AG04449 (cell line): ENCODE measurements at regions of chr19 and their contacts with region 1.

Region 1: DNA sequence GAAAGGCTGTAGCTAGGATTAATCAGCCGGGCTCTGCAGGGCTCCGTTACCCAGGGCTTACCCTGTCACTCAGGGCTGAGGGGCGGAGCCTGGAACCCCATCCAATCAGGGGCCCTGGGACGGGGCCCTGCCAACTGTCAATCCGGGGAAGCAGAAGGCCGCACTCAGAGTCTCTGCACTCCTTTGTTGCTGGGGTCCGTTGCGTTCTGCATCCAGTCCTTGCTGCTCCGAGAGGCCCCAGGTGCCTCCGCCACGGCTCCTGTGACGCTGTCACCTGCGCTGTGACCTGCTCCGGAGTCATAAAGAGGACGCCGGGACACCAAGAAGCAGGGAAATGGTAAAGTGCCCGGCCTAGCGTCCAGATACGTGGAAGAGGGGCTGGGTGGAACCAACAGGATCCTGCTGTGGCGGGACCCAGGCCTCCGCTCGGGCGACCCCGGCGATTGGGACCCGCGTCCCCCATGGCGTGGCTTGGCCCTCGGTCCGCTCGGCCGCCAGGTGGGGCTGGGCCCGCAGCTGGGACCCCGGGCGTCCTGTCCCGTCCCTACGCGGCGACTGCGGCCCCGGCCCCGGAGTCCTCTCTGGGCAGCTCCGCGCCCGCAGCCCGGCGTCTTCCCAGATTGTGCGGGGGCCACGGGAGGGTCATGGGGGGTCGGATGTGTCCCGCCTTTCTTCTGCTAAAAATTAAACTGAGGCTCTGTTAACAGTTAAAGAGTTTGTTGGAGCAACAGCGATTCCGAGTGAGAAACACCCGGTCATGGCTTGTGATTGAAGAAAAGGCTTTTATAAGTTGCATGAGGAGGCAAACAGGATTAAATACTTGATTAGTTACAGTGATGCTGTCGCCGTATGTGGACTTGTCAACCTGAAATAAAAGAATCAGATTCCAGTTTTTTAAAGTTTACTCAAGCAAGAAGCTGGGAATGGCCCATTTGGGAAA is at the start of gene ZNF491:
- DNase-seq: peak; percentile 34
- H3K4me3 ChIP-seq: peak within 1 kb of the TSS; percentile 81
- CTCF ChIP-seq: peak; percentile 50

Region 2: DNA sequence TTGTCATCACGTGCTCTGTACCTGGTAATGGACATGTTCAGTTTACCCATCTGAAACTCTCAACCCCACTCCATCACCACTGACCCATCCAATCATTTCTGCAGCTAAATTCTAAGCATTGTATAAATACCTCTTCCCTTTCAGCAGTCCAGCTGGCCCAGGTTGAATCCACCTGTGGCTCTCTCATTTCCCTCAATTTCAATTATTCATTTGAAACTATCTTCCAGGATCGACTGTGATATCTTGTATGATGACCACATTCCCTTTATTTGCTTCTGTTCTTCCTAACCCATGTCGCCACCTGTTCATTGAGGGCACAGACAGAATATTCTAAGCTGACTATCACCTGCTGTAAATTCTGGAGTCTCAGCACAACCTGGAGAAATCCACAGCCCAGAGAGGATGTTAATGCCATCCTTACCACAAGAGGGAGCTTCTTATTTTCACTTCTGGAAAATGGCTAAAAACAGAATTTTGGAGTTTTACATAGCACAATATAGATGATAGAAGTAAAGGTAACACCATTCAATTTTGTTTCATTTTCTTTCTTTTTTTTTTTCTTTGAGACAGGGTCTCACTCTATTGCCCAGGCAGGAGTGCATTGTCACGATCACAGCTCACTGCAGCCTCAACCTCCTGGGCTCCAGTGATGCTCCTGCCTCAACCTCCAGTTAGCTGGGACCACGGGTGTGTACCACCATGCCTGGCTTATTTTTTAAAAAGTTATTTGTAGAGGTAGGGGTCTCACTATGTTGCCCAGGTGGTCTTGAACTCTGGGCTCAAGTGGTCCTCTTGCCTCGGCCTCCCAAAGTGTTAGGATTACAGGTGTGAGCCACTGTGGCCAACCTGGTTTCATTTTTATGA is 98.5 kb before region 1 on chr19:
- CTCF ChIA-PET with region 1: interaction called, 12 read pairs
- POLR2A ChIA-PET with region 1: no interaction called
- DNase-seq: no peak
- H3K4me3 ChIP-seq: no peak overlapping the region
- CTCF ChIP-seq: peak; percentile 57

Region 3: DNA sequence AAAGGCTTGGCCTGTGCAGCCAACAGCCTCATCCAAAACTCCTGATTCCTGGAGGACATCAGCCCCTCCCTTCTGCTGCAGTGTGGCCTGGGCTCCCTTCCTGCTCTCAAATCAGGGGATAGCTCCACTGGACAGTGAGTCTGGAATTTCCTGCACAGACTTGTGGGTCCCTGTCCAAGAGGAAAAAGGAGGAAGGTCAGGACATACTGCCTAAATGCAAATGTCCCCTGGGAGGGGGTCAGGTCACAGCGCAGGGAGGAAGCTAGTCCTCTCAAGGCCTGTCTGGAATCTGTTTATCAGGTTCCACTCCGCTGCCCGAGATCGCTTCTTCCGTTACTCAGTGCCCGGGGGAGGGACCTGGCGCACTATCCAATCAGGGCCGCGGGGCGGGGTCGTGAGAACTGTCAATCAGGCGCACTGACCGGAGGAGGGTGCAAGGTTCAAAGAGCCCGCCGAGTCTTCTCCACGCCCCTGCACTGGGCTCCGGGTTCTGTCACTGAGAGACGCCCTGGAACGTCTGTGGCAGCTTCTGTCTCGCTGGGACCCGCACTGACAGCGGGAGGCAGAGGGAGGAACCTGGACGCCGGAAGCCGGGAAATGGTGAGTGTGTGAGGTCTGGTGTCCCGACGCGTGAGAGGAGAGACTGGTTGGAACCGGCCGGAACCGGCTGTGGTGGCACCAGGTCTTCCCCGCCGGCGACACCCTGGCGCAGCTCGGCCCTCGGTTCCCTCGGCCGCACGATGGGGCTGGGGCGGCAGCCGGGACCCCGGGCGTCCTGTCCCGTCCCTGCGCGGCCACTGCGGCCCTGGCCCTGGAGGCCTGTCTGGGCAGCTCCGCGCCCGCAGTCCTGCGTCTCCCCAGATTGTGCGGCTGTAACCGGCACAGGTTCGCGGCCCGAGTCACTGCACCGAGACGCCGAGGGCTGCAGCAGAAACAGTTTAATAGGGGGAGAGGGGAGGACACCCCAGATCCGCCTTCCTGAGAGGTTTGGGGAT is 31.8 kb before region 1 on chr19 and contains the start of gene ZNF441:
- CTCF ChIA-PET with region 1: interaction called, 13 read pairs
- POLR2A ChIA-PET with region 1: no interaction called
- DNase-seq: peak; percentile 42
- H3K4me3 ChIP-seq: peak within 1 kb of the TSS; percentile 95
- CTCF ChIP-seq: no peak

Region 4: GRCh38 chr19:11787536-11787935 is 11.1 kb before region 1 on chr19:
- CTCF ChIA-PET with region 1: interaction called, 31 read pairs
- POLR2A ChIA-PET with region 1: no interaction called
- DNase-seq: no peak
- H3K4me3 ChIP-seq: no peak overlapping the region
- CTCF ChIP-seq: no peak

Region 5: DNA sequence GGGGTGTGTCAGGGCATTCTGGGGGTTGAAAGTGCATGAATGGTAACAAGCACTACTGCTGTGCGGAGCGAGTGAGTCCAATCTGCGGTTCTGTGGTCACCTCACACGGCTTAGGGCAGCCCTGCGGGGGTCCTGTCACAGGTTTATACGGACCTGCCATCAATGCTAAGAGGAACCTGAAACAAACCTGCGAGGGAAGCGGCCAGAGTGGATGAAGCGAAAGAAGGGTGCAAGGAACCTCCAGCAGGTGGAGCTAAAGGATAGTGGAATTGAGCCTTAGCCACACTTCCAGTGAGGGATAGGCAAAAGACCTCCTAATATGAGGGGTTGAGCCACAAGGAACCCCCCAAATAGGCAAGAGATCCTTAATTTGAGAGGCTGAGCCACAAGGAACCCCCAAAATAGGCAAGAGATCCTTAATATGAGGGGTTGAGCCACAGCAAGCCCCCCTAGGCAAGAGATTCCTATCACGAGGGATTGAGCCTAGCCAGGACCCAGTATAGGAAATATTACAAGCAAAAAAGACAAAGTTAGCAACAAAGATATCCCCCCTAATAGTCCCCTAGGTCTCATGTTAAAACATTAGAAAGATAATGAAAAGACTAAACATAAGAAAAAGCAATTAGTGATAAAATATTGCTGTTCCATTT is 82.6 kb after region 1 on chr19:
- CTCF ChIA-PET with region 1: interaction called, 12 read pairs
- POLR2A ChIA-PET with region 1: no interaction called
- DNase-seq: no peak
- H3K4me3 ChIP-seq: peak overlapping the region; percentile 15; the same call in 1 of the 2 replicates
- CTCF ChIP-seq: peak; percentile 72

Region 6: DNA sequence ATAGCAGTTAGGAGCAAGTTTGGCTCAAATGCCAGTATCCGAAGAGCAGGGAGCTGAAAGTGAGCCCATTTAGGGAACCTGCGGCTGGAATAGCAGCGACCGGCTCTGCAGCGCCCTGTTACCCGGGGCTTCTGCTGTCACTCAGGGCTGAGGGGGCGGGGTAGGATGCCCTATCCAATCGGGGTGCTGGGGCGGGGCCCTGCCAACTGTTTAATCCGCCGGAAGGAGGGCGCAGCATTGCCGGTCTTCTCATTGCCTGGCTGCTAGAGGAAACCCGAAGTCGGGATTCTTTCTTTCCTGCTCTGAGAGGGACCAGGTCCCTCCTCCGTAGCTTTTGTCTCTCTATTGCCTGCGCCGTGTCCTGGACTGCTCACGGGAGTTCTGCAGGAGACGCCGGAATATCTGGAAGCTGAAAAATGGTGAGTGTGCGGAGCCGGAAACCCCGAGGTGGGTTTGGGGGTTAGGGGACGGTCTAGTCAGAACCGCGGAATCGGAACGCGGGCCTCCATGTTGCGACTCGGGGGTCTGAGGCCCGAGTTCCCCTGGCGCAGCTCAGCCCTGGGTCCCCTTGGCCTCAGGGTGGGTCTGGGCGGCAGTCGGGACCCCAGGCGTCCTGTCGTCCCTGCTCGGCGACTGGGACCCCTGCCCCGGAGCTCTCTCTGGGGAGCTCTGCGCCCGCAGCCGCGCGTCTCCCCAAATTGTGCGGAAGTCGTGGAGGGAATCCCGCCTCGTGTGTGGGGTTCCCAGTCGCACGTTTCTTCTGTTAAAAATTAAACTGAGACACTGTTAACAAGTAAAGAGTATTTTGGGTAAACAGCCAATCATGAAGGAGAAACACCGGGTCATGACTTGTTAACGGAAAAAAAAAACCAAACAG is 189.0 kb after region 1 on chr19:
- CTCF ChIA-PET with region 1: interaction called, 45 read pairs
- POLR2A ChIA-PET with region 1: no interaction called
- DNase-seq: no peak
- H3K4me3 ChIP-seq: peak overlapping the region; percentile 92
- CTCF ChIP-seq: no peak